ENCODE measurements at regions of chr10 and their contacts with region 1.

Region 1: GRCh38 chr10:14486777-14487487 is 156.2 kb upstream of the FRMD4A start:
- DNase-seq: no peak
- H3K4me3 ChIP-seq: no peak overlapping the region
- H3K27ac ChIP-seq: no peak overlapping the region
- H3K4me1 ChIP-seq: peaks cover 4% of the 10 kb centered on the region
- H3K27me3 ChIP-seq: no peaks in the 10 kb centered on the region
- CTCF ChIP-seq: no peak

Region 2: DNA sequence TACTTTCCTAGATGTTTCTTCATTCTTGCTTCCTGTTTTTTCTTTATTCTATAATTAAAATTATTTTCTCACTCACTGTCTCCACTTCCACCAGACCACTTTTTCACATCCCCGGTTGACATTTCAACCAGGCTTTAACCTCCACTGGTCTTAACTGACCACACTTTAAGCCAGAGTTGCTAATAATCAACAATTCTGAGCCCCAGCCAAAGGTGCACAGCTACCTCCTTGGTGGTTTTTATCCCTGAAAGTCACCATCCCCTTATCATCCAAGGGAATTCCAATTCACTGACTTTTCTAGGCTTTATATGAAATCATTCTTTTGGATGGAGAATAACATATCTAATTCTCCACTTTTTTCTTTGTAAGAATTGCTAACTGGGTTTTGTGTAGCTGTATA is 295.1 kb before region 1 on chr10:
- intact Hi-C with region 1: loop called (anchors 10 kb)
- DNase-seq: no peak
- H3K4me3 ChIP-seq: no peak overlapping the region
- H3K27ac ChIP-seq: no peak overlapping the region
- H3K4me1 ChIP-seq: no peaks in the 10 kb centered on the region
- H3K27me3 ChIP-seq: no peaks in the 10 kb centered on the region
- CTCF ChIP-seq: no peak

Region 3: DNA sequence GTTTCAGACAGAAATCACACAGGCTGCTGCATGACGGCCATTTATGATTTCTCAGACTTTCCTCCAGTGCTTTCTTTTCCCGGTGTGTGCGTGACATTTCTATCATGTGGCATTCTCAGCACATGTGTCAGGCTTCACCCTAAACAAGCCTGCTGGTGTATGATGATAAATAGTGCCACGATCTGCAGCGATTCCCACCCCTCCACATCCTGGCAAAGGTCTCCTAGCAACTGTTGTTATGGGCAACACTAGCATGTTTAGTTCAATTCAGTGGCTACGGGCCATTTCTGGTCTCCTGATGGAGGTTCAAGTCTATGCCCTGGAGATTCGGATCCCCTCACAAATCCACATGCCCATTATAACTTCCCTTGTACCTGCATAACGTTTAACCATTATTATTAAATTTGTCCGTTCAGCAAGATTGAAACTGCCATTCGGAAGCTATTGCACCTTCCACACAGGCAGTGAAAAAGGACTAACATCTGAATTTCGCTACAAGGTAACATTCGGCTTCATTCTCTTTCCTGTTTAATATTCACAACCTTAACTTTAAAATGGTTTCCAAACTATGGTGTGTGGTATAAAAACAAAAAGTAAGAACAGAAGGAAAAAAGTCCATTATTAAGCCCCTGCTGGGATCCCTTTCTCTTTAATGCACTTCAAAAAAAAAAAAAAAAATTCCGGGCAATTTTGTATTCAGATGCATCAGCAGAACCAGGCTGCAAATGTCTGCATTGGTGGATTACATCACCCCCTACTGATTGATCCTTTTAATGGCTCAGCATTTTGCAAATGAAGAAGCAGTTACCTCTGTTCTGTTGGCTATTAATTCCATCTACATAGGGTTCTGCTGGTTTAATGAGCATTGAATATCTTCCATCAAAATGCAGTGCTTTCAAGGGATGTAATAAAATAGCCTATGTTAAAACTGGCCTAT is 246.4 kb before region 1 on chr10:
- intact Hi-C with region 1: no loop called
- DNase-seq: no peak
- H3K4me3 ChIP-seq: no peak overlapping the region
- H3K27ac ChIP-seq: no peak overlapping the region
- H3K4me1 ChIP-seq: no peaks in the 10 kb centered on the region
- H3K27me3 ChIP-seq: no peaks in the 10 kb centered on the region
- CTCF ChIP-seq: no peak

Region 4: GRCh38 chr10:15106352-15107013 is 619.6 kb after region 1 on chr10:
- intact Hi-C with region 1: loop called (anchors 10 kb)
- DNase-seq: peak; percentile 84
- H3K4me3 ChIP-seq: no peak overlapping the region
- H3K27ac ChIP-seq: no peak overlapping the region
- H3K4me1 ChIP-seq: no peaks in the 10 kb centered on the region
- H3K27me3 ChIP-seq: no peaks in the 10 kb centered on the region
- CTCF ChIP-seq: peak; percentile 92

Measured in colonic mucosa (tissue), 4 donors.